Activated CD8-positive, alpha-beta T cell treated with anti-CD3 and anti-CD28 coated beads for 36 hours (primary cell): ENCODE measurements at regions of chr22 and their contacts with region 1.

Region 1: DNA sequence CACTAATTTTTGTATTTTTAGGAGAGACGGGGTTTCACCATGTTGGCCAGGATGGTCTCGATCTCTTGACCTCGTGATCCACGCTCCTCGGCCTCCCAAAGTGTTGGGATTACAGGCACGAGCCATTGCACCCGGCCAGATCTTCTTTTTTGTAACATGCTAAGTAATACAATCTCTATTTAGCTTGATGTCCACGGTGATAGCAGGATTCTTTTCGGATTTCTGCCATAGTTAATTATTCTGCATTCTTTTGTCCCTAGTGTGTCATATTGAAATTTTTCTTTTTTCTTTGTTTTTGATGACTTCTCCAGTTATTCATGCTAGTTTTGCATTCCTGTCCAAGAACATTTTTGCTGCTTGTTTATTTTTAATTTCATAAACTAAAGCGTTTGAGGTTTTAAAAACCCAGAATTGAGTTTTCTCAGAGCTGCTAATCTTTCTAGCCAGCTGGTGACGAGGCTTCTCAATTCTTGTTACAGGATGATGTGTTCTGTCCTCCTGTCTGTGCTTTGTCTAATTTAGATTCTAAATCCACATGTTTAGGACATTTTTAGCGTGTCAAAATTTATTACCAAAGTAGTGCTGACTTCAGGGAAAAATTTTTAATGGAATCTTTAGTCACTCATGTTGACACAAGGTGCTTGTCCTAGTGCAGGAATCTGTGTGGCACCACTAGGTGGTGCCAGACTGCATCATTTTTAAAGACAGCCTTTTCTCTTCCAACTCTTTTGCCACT is 21.8 kb downstream of the NF2 start:
- DNase-seq: peak; percentile 69
- ATAC-seq: peak; percentile 61
- H3K4me3 Mint-ChIP-seq: no peak overlapping the region
- H3K27ac Mint-ChIP-seq: peak overlapping the region; percentile 26
- H3K4me1 Mint-ChIP-seq: peaks cover 60% of the 10 kb centered on the region
- H3K27me3 Mint-ChIP-seq: no peaks in the 10 kb centered on the region
- CTCF ChIP-seq: peak; percentile 93

Region 2: DNA sequence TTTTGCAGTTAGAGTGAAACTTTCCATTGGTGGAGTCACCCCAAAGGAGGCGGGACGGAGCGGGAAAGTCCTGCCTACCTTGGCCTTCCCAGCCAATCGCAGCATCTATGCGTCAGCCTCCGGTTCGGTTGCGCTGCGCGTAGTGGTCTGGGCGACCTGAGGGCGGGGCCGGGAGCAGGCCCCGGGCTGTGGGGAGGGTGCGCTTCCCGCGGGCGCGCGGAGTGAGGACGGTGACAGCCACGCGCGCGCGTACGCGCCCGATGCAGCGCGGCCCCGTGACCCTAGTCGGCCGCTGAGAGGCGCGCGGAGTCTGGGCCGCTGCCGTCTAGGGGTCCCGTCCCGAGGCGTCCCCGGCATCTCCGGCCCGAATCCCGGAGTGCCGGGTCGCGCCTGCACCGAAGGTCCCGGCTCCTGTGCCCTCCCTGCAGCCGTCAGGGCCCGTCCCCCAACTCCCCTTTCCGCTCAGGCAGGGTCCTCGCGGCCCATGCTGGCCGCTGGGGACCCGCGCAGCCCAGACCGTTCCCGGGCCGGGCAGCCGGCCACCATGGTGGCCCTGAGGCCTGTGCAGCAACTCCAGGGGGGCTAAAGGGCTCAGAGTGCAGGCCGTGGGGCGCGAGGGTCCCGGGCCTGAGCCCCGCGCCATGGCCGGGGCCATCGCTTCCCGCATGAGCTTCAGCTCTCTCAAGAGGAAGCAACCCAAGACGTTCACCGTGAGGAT is 21.7 kb before region 1 on chr22 and contains the start of gene NF2:
- CTCF ChIA-PET with region 1: interaction called, 37 read pairs
- POLR2A ChIA-PET with region 1: interaction called, 8 read pairs
- intact Hi-C with region 1: no loop called
- DNase-seq: peak; percentile 99
- ATAC-seq: peak; percentile 97
- H3K4me3 Mint-ChIP-seq: peak within 1 kb of the TSS; percentile 85
- H3K27ac Mint-ChIP-seq: peak within 1 kb of the TSS; percentile 95
- H3K4me1 Mint-ChIP-seq: peaks cover 22% of the 10 kb centered on the region
- H3K27me3 Mint-ChIP-seq: no peaks in the 10 kb centered on the region
- CTCF ChIP-seq: no peak
- total RNA-seq, gene NF2: 34.4 to 35.3 TPM

Region 3: GRCh38 chr22:29635734-29636357 is 10.6 kb after region 1 on chr22:
- CTCF ChIA-PET with region 1: interaction called, 56 read pairs
- POLR2A ChIA-PET with region 1: interaction called, 3 read pairs
- intact Hi-C with region 1: no loop called
- DNase-seq: no peak
- ATAC-seq: peak; percentile 56
- H3K4me3 Mint-ChIP-seq: no peak overlapping the region
- H3K27ac Mint-ChIP-seq: no peak overlapping the region
- H3K4me1 Mint-ChIP-seq: peaks cover 28% of the 10 kb centered on the region
- H3K27me3 Mint-ChIP-seq: no peaks in the 10 kb centered on the region
- CTCF ChIP-seq: peak; percentile 66

Region 4: GRCh38 chr22:29797351-29797750 is 172.1 kb after region 1 on chr22:
- CTCF ChIA-PET with region 1: interaction called, 10 read pairs
- POLR2A ChIA-PET with region 1: no interaction called
- intact Hi-C with region 1: no loop called
- DNase-seq: peak; percentile 41
- ATAC-seq: peak; percentile 60
- H3K4me3 Mint-ChIP-seq: no peak overlapping the region
- H3K27ac Mint-ChIP-seq: peak overlapping the region; percentile 64
- H3K4me1 Mint-ChIP-seq: peaks cover 14% of the 10 kb centered on the region
- H3K27me3 Mint-ChIP-seq: no peaks in the 10 kb centered on the region
- CTCF ChIP-seq: no peak